HepG2 (cell line): ENCODE measurements at regions of chr7 and their contacts with region 1.

Region 1: DNA sequence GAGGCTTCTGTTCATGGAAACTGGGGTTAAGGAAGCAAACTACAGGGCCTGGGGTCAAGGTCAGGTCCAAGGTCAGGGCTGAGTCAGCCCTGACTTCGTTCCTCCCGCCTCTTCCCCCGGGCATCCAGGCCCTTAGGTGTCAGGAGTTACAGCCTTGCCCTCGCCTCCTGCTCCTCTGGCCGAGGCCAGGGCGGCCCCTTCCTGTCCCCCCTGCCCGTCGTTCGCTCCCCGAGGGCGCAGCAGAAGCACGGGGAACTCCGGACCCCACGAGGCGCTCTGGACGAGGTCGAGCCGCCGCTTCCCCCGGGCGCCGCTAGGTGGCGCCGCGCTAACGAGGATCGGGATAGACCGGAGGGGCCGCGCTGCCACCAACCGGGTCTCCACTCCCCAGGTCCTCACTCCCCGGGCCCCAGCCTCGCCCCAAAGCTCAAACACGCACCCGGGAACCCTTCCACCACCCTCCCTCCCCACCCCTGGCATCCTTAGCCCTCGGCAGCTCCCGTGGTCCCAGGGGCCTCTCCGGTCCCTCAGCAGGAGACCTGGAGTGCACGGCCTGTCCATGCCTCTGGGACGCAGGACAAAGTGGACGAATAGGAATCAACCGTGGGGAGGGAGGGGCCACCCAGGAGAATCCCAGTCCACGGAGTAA is 59.2 kb upstream of the MYL10 start:
- DNase-seq: peak; percentile 44
- ATAC-seq: peak; percentile 86
- H3K4me3 ChIP-seq: peak overlapping the region in 2 of 3 experiments; percentile 53 to 72; a peak in 3 of 6 replicates
- H3K27ac ChIP-seq: no peak overlapping the region
- H3K4me1 ChIP-seq: peaks cover 40% of the 10 kb centered on the region
- H3K27me3 ChIP-seq: peaks cover 0 to 14% of the 10 kb centered on the region in 2 experiments; a peak in 2 of 5 replicates
- CTCF ChIP-seq: peak; percentile 99
- EP300 ChIP-seq: no peak
- POLR2A ChIP-seq: no peak
- RAD21 ChIP-seq: peak; percentile 95

Region 2: GRCh38 chr7:101602484-101603241 is 85.6 kb before region 1 on chr7:
- CTCF ChIA-PET with region 1: no interaction called
- POLR2A ChIA-PET with region 1: no interaction called
- in situ Hi-C with region 1: no loop called
- intact Hi-C with region 1: loop called (anchors 1 kb)
- DNase-seq: peak; percentile 72
- ATAC-seq: peak; percentile 86
- H3K4me3 ChIP-seq: peak overlapping the region in 1 of 3 experiments; percentile 55; a peak in 1 of 6 replicates
- H3K27ac ChIP-seq: no peak overlapping the region
- H3K4me1 ChIP-seq: peaks cover 47% of the 10 kb centered on the region
- H3K27me3 ChIP-seq: peaks cover 0 to 21% of the 10 kb centered on the region in 2 experiments; a peak in 3 of 5 replicates
- CTCF ChIP-seq: peak; percentile 94
- EP300 ChIP-seq: no peak
- POLR2A ChIP-seq: no peak
- RAD21 ChIP-seq: peak; percentile 90

Region 3: DNA sequence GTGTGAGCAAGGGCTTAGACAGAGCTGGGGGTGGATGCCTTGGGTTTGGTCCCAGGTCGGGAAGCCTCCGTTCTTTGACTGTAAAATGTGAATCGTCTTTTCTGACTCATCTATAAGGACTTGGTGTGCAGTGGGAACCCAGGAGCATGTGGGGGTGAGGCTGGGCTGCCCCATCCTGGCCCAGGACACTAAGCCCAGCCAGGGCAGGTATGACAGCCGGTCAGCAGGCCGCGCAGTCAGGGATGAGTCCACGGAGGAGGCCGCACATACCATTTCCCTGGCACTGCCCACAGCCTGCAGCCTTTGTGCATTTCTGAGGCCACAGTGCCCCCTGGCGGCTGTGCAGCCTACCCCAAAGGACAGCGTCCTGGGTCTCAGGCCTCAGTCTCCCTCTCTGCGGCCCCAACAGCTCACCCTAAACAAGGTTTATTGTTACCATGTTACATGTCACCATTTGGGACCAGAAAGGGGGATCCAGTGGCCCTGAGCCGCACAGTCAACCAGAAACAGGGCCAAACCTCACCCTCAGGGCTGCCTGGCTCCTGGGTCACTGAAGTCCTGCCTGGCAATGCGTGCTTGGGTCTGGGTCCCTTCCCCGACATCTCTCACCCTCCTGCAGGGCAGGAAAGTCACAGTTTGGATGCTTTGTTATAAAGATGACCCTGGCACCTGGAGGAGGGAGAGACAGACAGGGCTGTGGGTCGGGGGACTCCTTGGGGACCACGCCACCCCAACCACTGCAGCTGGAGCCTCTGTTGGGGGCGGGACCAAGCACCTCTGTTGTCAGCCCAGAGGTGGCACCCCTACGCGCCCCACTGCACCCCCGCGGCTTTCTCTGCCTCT is 584.0 kb after region 1 on chr7:
- CTCF ChIA-PET with region 1: interaction called, 8 read pairs
- POLR2A ChIA-PET with region 1: no interaction called
- in situ Hi-C with region 1: loop called (anchors 25 kb)
- intact Hi-C with region 1: loop called (anchors 5 kb)
- DNase-seq: peak; percentile 65
- ATAC-seq: peak; percentile 75
- H3K4me3 ChIP-seq: peak overlapping the region in 1 of 3 experiments; percentile 40; a peak in 1 of 6 replicates
- H3K27ac ChIP-seq: no peak overlapping the region
- H3K4me1 ChIP-seq: peaks cover 45% of the 10 kb centered on the region
- H3K27me3 ChIP-seq: no peaks in the 10 kb centered on the region; a peak in 1 of 5 replicates
- CTCF ChIP-seq: peak; percentile 99
- EP300 ChIP-seq: no peak
- POLR2A ChIP-seq: no peak
- RAD21 ChIP-seq: peak; percentile 98